ENCODE measurements at regions of chr4 and their contacts with region 1.

Region 1: DNA sequence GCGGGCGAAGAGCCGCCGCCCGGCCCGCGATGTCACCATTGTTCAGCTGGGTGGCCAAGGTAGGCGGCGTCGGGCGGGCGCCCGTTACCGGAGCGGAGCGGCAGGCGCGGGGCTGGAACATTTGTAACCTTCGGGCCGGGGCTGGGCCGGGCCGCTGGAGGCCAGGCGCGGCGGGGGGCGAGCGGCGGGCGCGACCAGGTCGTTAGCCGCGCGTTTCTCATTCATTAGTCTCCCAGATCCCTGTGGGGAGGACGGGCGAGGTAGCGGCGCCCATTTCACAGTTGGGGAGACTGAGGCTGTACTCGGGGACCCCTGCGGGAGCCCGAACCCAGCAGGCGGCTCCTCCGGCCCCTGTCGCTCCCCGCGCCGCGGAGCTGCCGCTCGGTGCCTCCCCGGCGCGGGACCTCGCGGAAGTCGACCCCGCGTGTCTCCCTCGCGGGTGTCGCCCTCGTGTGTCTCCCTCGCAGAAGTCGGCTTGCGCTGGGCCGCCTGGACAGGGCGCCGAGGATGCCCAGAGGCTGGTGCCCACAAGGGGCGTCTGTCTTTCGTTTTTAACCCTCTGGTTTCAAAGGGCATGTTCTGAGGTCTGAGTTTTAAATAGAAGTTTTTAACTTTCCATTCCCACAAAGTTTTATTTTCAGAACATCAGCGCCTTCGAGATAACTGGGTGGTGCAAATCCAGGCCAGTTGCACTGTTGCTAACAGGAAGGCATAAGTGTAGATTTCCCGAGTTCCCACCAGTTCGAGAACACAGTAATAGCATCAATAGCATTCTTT is 17.5 kb downstream of the PTTG2 start:
- DNase-seq: peak; percentile 44
- ATAC-seq: peak; percentile 86
- H3K4me3 ChIP-seq: peak overlapping the region; percentile 83
- H3K27ac ChIP-seq: peak overlapping the region; percentile 45
- H3K4me1 ChIP-seq: peaks cover 21% of the 10 kb centered on the region
- H3K27me3 ChIP-seq: no peaks in the 10 kb centered on the region
- CTCF ChIP-seq: peak; percentile 67 to 85 (median 68)
- EP300 ChIP-seq: no peak
- POLR2A ChIP-seq: peak; percentile 62
- RAD21 ChIP-seq: peak; percentile 66

Region 2: GRCh38 chr4:37603070-37603468 is 374.6 kb before region 1 on chr4:
- CTCF ChIA-PET with region 1: interaction called, 20 read pairs
- POLR2A ChIA-PET with region 1: no interaction called
- RAD21 ChIA-PET with region 1: interaction called, 4 read pairs
- SMC1A ChIA-PET with region 1: interaction called, 4 read pairs
- in situ Hi-C with region 1: no loop called
- intact Hi-C with region 1: no loop called
- DNase-seq: peak; percentile 26
- ATAC-seq: peak; percentile 97
- H3K4me3 ChIP-seq: no peak overlapping the region
- H3K27ac ChIP-seq: no peak overlapping the region
- H3K4me1 ChIP-seq: no peaks in the 10 kb centered on the region
- H3K27me3 ChIP-seq: no peaks in the 10 kb centered on the region
- CTCF ChIP-seq: peak; percentile 94 to 99 (median 98); a peak in 5 of 6 replicates
- EP300 ChIP-seq: no peak
- POLR2A ChIP-seq: no peak
- RAD21 ChIP-seq: peak; percentile 94

Region 3: DNA sequence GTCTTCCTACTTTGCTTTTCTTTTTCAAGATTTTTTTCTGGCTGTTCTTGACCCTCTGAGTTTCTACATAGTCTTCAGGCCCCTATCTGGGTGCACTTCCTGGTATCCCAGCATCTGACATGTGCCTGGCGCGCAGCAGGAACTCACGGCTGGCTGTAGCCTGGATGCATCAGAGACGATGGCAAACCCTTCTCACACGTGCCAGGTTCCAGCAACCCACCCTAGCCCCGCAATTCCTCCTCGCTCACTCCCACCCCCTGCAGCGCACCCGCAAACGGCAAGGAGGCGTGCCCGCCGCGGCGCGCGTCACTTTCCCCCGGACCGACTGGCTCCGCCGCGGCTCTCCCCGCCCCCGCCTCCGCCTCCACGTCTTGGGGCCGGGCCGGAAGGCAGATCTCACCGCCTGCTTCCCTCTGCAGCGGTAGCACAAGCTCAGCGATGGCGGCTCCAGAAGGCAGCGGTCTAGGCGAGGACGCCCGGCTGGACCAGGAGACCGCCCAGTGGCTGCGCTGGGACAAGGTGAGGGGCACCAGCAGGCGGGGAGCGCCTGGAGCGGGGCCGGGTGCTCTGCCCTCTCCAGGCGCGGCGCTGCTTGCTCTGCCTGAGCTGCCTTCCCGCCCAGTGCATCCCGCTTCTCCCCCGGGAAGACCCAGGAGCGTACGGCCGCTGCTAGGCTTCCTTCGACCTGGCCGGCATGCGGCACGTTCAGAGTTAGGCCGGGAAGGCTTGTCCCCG is 151.2 kb before region 1 on chr4 and contains the start of gene PGM2:
- CTCF ChIA-PET with region 1: interaction called, 26 read pairs
- POLR2A ChIA-PET with region 1: interaction called, 6 read pairs
- RAD21 ChIA-PET with region 1: interaction called, 15 read pairs
- SMC1A ChIA-PET with region 1: interaction called, 10 read pairs
- in situ Hi-C with region 1: no loop called
- intact Hi-C with region 1: loop called (anchors 5 kb)
- DNase-seq: peak; percentile 45
- ATAC-seq: peak; percentile 98
- H3K4me3 ChIP-seq: peak within 1 kb of the TSS; percentile 79
- H3K27ac ChIP-seq: peak within 1 kb of the TSS; percentile 66
- H3K4me1 ChIP-seq: 0 out of 2 replicates have a peak, but pooled peaks cover 5% of the 10 kb centered on the region
- H3K27me3 ChIP-seq: no peaks in the 10 kb centered on the region
- CTCF ChIP-seq: 0 out of 6 replicates have a peak, but pooled peaks of 1 of the 3 experiments have one; percentile 7
- EP300 ChIP-seq: no peak
- POLR2A ChIP-seq: peak; percentile 100
- RAD21 ChIP-seq: 0 out of 2 replicates have a peak, but pooled peaks have one; percentile 5
- polyA plus RNA-seq, gene PGM2: 11.9 to 15.1 TPM

Region 4: GRCh38 chr4:37989398-37990260 is 12.0 kb after region 1 on chr4:
- CTCF ChIA-PET with region 1: interaction called, 11 read pairs
- POLR2A ChIA-PET with region 1: no interaction called
- RAD21 ChIA-PET with region 1: interaction called, 3 read pairs
- SMC1A ChIA-PET with region 1: interaction called, 5 read pairs
- in situ Hi-C with region 1: no loop called
- intact Hi-C with region 1: no loop called
- DNase-seq: no peak
- ATAC-seq: peak; percentile 33; the same call in 2 of the 3 replicates
- H3K4me3 ChIP-seq: no peak overlapping the region
- H3K27ac ChIP-seq: 0 out of 2 replicates have a peak overlapping the region, but pooled peaks have one; percentile 30
- H3K4me1 ChIP-seq: peaks cover 11% of the 10 kb centered on the region; the same call in 1 of the 2 replicates
- H3K27me3 ChIP-seq: no peaks in the 10 kb centered on the region
- CTCF ChIP-seq: no peak
- EP300 ChIP-seq: no peak
- POLR2A ChIP-seq: no peak
- RAD21 ChIP-seq: no peak

Region 5: GRCh38 chr4:38013461-38014366 is 36.1 kb after region 1 on chr4:
- CTCF ChIA-PET with region 1: no interaction called
- POLR2A ChIA-PET with region 1: no interaction called
- RAD21 ChIA-PET with region 1: no interaction called
- SMC1A ChIA-PET with region 1: no interaction called
- in situ Hi-C with region 1: no loop called
- intact Hi-C with region 1: no loop called
- DNase-seq: no peak
- ATAC-seq: no peak
- H3K4me3 ChIP-seq: no peak overlapping the region
- H3K27ac ChIP-seq: no peak overlapping the region
- H3K4me1 ChIP-seq: no peaks in the 10 kb centered on the region
- H3K27me3 ChIP-seq: no peaks in the 10 kb centered on the region
- CTCF ChIP-seq: no peak
- EP300 ChIP-seq: no peak
- POLR2A ChIP-seq: no peak
- RAD21 ChIP-seq: no peak

Region 6: DNA sequence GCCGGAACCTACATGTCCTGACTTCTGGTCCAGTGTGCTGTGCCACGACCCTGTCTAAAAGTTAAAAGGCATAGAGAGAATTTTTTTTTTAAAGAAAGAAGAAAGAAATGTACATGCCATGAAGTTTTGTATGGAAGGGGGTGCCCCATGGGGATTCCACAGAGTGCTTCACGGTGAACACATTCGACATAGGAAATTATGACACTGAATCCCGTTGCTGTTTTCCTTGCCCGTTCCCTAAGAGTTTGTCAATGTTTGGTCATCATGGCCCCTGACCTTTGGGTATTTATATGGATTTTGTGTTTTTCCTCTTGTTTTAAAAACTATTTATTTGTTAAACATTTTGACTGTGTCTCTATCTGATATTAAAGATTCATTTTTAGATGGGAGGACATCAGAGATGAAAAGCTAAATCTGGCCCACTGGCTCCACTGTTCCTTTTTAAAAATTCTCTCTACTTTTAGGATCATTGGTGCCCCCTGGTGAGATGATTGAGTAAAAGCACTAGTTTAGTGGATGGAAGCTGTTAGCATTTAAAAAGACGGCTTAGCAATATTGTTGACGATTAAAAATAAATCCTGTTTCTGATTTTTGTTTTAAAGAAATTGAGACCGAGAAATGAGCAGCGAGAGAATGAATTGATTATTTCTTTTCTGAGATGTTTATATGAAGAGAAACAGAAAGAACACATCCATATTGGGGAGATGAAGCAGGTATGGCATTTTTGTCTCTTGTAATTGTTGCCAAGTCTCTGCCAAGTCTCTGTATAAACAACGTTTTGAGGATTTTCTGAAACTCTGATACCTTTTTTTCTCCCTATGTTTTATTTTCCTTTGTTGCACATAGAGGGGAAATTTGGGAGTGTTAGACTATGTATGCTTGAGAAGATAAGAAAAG is 57.6 kb after region 1 on chr4:
- CTCF ChIA-PET with region 1: interaction called, 16 read pairs
- POLR2A ChIA-PET with region 1: interaction called, 3 read pairs
- RAD21 ChIA-PET with region 1: interaction called, 4 read pairs
- SMC1A ChIA-PET with region 1: interaction called, 10 read pairs
- in situ Hi-C with region 1: no loop called
- intact Hi-C with region 1: no loop called
- DNase-seq: no peak
- ATAC-seq: peak; percentile 74
- H3K4me3 ChIP-seq: no peak overlapping the region
- H3K27ac ChIP-seq: no peak overlapping the region
- H3K4me1 ChIP-seq: no peaks in the 10 kb centered on the region
- H3K27me3 ChIP-seq: no peaks in the 10 kb centered on the region
- CTCF ChIP-seq: peak; percentile 44 to 75 (median 64); a peak in 5 of 6 replicates
- EP300 ChIP-seq: no peak
- POLR2A ChIP-seq: no peak
- RAD21 ChIP-seq: peak; percentile 89